Gastrocnemius medialis (tissue), 4 donors: ENCODE measurements at regions of chr11 and their contacts with region 1.

Region 1: GRCh38 chr11:66677599-66678375 is at the start of gene RBM4B:
- DNase-seq: peak; percentile 95 to 96
- ATAC-seq: peak; percentile 88 to 89
- H3K4me3 ChIP-seq: peak within 1 kb of the TSS; percentile 77 to 89 (median 86)
- H3K27ac ChIP-seq: peak within 1 kb of the TSS; percentile 96 to 99 (median 98)
- H3K4me1 ChIP-seq: peaks cover 18 to 31% of the 10 kb centered on the region in 2 donors
- H3K27me3 ChIP-seq: no peaks in the 10 kb centered on the region
- CTCF ChIP-seq: no peak
- POLR2A ChIP-seq: peak; percentile 87 to 96
- total RNA-seq, gene RBM4B: 4.5 to 11.7 (median 6.5) TPM

Region 2: DNA sequence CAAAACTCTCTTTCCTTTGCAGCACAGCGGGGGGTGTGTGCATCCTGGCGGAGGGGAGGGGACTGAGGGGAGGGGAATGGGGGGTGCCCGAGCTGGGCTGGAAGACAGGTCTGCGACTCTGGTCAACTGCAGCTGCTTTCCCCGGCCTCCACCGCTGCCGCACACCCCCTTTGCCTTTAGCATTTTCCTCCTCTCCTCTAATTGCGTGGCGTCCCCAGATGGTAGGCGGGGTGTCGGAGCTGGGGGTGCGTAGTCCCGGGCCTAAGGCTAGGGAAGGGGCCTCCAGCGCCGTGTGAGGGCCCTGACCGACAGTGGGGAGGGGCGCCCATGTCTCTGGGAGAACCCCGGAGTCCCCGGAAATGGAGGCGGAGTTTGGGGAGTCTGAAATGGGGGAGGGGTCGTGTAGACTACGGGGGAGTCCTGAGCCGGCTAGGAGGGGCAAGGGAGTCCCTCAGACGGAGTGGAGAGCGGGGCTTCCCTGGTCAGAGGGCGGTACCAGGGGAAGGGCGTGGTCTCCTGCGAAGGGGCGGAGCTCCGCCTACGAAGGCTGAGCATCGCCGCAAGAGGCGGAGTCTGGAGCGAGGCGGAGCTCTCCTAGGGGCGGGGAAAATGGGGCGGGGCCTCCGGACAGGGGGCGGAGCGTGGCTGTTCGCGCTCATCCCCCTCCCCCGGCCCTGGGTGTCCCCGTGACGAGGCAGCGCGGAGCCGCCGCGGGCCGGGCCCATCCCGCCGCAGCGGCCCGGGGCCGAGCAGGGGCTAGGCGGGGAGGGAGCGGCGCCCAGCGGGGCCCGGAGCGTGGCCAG is 211.4 kb before region 1 on chr11 and contains the start of gene PELI3:
- in situ Hi-C with region 1: no loop called
- intact Hi-C with region 1: loop called (anchors 1 kb)
- DNase-seq: peak; percentile 87 to 90
- ATAC-seq: peak; percentile 87 to 92
- H3K4me3 ChIP-seq: peak within 1 kb of the TSS; percentile 61 to 89 (median 70)
- H3K27ac ChIP-seq: peak within 1 kb of the TSS; percentile 73 to 81 (median 78)
- H3K4me1 ChIP-seq: peaks cover 6 to 10% of the 10 kb centered on the region in 2 donors
- H3K27me3 ChIP-seq: no peaks in the 10 kb centered on the region
- CTCF ChIP-seq: no peak
- POLR2A ChIP-seq: peak in 1 of 2 donors; percentile 71
- total RNA-seq, gene PELI3: 26.1 to 55.9 (median 37.3) TPM

Region 3: DNA sequence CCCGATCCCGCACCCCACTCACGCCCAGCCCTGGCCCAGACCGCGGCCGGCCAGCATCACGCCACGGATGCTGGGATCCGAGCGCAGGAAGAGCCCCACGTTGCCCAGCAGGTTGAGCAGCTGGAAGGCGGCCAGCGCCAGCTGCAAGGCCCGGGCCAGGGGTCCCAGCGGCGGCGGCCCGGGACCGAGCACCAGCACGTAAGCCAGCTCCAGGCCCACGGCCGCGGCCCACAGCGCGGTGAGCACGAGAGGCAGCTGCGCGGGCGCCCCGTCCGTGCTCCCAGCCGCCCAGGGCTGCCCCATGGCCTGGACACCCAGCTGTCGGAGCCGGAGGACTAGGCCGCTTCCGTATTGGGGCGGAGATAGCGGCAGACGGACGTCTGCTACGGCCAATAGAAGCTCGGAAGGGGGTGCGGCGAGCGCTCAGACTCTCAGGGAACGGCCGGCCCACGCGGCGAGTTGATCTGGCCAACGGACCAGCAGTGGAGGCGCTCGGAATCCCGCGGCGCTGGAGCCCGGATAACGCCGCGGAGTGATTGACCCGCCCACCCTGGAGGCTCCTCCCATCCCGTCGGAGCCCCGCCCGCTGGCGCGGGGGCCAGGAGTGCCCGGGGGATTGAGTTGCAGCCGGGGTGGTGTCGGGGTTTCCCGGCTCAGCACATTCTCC is 132.0 kb before region 1 on chr11 and contains the start of gene ZDHHC24:
- in situ Hi-C with region 1: no loop called
- intact Hi-C with region 1: loop called (anchors 1 kb)
- DNase-seq: peak; percentile 96 to 97
- ATAC-seq: peak; percentile 86 to 92
- H3K4me3 ChIP-seq: peak within 1 kb of the TSS; percentile 70 to 99 (median 80)
- H3K27ac ChIP-seq: peak within 1 kb of the TSS; percentile 79 to 94 (median 91)
- H3K4me1 ChIP-seq: peaks cover 25 to 50% of the 10 kb centered on the region in 2 donors
- H3K27me3 ChIP-seq: no peaks in the 10 kb centered on the region
- CTCF ChIP-seq: no peak
- POLR2A ChIP-seq: peak; percentile 49 to 75
- total RNA-seq, gene ZDHHC24: 7.2 to 13.0 (median 11.2) TPM

Region 4: DNA sequence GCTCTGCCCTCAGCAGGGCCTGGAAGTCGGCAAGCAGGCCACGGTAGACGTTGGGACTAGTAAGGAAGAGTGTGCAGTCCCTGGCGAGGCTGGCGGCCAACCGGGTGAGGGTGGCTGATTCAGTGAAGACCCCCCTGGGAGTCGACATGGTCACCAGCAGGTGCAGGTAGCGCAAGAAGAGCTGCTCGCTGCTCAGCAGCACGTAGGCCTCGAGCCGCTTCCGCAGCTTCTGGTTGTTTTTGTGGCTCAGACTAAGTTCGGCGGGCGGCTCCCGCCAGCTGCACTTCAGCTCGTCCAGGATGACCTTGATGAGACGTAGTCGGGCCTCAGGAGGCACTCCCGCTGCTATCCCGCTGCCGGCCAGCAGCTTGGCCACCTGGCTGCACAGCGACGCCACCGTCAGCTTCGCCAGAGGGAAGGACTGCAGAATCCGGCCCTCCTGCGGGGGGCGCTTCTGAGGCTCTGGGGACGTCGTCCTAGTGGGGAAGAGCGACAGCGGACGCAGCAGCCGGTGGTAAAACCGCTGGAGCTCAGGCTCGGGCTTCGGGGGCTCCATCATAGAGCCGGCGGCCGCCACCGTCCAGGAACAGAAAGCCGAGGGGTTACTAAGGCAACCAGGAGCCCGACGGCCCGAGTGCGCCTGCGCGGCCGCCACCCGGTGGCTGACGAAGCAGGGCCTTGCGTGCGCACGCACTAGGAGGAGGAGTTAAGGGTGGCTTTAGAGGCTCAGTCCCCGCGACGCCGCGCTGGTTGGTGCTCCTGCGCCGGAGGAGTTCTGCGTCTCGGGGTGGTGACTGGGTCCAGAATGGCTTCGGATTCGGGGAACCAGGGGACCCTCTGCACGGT is 85.1 kb before region 1 on chr11 and contains the starts of genes CCDC87 and CCS:
- in situ Hi-C with region 1: loop called in 1 of 4 experiments (anchors 10 kb)
- intact Hi-C with region 1: loop called (anchors 1 kb)
- DNase-seq: peak; percentile 96 to 97
- ATAC-seq: peak; percentile 97 to 98
- H3K4me3 ChIP-seq: peak within 1 kb of the TSS; percentile 63 to 98 (median 82)
- H3K27ac ChIP-seq: peak within 1 kb of the TSS; percentile 82 to 91 (median 88)
- H3K4me1 ChIP-seq: peaks cover 12 to 21% of the 10 kb centered on the region in 2 donors
- H3K27me3 ChIP-seq: no peaks in the 10 kb centered on the region
- CTCF ChIP-seq: peak; percentile 79 to 94 (median 86)
- POLR2A ChIP-seq: peak; percentile 88
- total RNA-seq, gene CCDC87: 0.13 to 0.41 TPM in 2 of 4 donors, not detected in the others
- total RNA-seq, gene CCS: 9.0 to 12.3 (median 11.7) TPM

Region 5: DNA sequence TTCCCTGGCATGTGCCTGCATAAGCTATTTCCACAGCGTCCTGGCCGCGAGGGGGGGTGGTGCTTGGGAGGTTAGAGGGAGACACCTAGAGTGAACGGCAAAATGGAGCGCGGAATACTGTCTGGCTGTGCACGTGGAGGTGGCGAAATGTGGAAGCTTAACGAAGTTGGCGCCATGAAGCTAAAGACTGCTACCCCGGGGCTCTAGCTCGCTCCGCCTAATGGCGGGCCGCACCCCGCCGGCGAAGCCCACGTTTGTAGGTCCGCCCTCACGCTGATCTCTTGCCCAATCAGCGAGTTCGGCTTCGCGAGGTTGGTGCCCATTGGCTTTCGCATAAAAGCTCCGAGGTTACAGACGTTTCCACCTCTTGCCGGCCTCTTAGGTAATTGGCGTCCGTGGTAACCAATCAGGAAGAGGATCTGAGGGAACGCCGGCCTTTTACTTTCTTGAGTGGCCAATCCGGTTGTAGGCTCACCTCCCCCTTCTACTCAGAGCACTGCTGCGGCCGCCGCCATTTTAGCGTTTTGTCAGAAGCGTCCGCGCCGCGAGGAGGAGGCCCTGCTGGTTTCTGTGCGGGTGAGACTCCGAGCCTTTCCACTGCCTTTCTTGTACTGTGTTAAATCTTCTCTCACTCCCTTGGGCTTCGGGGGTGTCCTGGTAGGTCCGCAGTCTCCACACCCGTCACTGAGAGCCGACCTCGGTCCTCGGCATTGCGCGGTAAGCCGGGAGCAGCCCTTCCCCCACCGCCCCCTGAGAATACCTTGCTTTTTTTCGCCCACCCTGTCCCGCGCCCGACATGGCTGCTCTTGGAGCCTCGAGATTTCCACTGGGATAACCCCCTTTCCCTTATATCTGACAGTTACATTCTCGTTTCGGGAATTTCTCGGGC is 39.4 kb before region 1 on chr11 and contains the start of gene RBM4:
- in situ Hi-C with region 1: no loop called
- intact Hi-C with region 1: loop called (anchors 1 kb)
- DNase-seq: peak; percentile 100
- ATAC-seq: peak; percentile 99
- H3K4me3 ChIP-seq: peak within 1 kb of the TSS; percentile 73 to 90 (median 84)
- H3K27ac ChIP-seq: peak within 1 kb of the TSS; percentile 90 to 94 (median 92)
- H3K4me1 ChIP-seq: peaks cover 49 to 56% of the 10 kb centered on the region in 2 donors
- H3K27me3 ChIP-seq: no peaks in the 10 kb centered on the region
- CTCF ChIP-seq: peak in 2 of 5 experiments; percentile 13 to 28
- POLR2A ChIP-seq: peak; percentile 92 to 95
- total RNA-seq, gene RBM4: 62.4 to 117 (median 69.2) TPM